Posterior cingulate gyrus (tissue), 11 donors: ENCODE measurements at regions of chr1 and their contacts with region 1.

Region 1: DNA sequence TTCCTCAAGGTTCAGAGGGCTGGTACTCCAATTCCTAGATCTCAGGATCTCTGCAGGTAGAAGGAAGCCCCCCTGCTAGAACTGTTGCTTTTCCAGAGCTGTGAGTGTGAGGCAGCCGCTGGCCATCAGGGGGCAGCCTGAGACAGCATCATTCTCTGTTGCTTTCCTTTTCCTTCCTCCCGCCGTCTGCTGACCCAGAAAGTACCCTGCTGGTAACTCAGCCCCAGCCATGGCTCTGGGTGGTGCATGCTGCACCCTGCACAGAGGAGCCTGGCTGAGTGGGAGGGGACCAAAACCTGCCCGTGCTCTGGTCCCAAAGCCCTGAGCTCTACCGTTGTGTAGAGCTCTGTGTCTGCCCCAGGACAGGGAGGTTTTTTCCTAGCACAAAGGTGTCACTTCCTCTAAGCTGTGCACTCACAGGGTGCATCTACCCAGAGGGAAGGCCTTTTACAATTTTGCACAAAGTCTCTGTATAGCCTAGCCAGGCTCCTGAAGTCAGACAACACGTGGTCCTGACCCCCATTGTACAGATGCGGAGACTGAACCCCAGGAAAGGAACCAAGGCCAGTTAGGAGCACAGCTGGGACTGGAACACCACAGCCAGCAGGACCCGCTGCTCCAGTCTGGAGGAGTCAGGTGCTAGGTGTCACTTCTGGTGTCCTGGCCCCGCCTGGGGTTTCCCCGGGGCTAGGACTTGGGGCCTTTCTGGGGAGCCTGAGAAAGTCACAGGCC is 5.6 kb upstream of the FAM131C start:
- DNase-seq: peak; percentile 49 to 96 (median 78)

Region 2: DNA sequence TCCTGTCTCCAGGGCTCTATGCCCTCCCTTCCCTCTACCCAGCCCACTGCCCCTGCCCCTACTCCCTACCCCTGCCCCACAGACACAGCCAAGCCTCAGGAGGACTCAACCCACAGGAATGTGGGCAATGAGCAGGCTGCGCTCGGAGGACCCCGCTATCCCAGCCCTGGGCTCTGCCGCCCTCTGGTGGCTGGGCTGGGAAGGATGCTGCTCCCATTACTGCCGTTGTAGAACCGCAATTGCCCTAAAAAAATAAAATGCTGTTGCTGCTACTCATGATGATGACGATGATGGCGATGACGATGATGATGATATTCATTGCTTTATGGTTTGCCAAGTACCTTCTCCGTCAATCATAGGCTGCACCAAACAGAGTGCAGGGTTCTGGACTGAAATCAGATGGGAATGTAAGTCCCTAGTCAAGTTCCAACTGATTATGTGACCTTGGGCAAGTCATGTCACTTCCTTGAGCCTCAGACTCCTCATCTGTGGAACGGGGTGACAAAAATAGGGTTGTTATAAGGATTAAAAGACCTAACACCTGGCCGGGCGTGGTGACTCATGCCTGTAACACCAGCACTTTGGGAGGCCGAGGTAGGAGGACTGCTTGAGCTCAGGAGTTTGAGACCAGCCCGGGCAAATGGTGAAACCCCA is 108.8 kb after region 1 on chr1:
- intact Hi-C with region 1: loop called (anchors 1 kb)
- DNase-seq: peak in 9 of 10 donors; percentile 36 to 96 (median 68)

Region 3: DNA sequence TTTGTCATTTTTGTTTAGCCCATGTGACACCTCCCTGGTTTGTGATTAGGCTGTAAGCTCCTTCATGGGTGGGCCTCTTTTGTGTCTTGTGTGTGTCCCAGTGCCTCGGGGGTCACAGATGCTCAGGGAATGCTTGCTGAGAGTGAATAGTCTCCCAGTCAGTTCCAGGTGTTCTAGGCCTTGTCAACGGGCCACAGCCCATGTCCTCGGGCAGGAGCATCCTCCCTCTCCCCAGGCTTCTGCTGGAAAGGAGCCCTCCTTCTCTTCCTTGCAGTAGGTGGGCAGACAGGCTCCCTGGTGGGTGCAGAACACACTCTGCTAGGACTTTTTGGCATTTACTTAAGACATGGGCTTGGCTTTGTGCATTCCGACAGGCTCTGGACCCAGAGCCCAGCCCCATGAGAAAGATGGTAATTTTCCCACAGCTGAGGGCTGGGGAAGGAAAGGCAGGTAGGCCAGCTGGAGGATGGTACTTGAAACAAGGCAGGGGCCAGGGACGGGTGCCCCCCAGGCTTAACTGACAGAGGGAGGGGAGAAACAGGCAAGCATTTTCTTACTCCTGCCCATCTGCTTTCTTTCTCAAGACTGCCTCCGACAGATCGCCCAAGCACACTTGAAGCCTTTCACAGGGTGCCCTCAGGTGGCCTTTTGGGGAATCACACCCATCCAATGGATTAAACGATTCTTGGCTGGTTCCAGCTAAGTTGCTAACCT is 165.0 kb after region 1 on chr1:
- intact Hi-C with region 1: loop called (anchors 2 kb)
- DNase-seq: peak; percentile 40 to 93 (median 74)

Region 4: DNA sequence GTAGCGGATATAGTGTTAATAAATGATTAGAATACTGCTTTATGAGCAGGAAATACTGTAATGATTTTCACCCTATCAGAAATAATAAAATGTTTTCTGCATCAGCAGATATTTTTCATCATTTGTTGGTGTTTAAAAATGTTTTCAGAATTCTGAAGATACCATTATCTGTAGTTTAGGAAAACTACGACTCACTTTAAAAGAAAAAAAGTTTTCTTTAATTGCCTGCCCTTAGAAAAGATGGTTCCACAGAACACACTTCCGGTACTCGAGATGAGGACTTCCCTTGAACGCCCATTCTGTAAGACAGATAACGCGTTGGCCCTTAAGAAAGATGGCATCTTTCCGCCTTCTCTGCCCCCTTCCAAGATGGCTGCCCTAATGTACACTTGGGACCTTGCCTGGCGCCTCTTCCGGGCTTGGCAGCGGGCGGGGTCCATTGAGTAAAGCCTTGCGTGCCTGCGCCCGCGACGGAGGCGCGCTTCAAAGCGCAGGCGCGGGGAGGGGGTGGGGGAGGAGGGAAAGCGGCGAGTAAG is 287.7 kb after region 1 on chr1 and contains the start of gene SZRD1:
- intact Hi-C with region 1: loop called (anchors 2 kb)
- DNase-seq: peak; percentile 89 to 99 (median 94)

Region 5: GRCh38 chr1:16396591-16396990 is 317.5 kb after region 1 on chr1:
- intact Hi-C with region 1: no loop called
- DNase-seq: peak in 6 of 10 donors; percentile 15 to 88 (median 52)

Region 6: DNA sequence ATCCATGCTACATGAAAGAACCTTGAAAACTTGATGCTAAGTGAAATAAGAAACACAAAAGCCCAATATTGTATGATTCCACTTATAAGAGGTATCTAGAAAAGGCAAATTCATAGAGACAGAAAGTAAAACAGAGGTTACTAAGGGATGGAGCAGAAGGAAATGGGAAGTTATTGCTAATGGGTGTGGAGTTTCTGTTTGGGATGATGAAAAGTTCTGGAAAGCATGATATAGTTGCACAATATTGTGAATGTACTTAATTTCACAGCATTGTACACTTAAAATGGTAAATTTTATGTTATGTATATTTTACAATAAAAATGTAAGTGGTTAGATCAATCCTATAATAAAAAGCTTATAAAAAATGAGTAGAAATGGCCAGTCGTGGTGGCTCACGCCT is 359.8 kb after region 1 on chr1:
- intact Hi-C with region 1: loop called (anchors 5 kb)
- DNase-seq: no peak